ENCODE measurements at regions of chr13 and their contacts with region 1.

Region 1: DNA sequence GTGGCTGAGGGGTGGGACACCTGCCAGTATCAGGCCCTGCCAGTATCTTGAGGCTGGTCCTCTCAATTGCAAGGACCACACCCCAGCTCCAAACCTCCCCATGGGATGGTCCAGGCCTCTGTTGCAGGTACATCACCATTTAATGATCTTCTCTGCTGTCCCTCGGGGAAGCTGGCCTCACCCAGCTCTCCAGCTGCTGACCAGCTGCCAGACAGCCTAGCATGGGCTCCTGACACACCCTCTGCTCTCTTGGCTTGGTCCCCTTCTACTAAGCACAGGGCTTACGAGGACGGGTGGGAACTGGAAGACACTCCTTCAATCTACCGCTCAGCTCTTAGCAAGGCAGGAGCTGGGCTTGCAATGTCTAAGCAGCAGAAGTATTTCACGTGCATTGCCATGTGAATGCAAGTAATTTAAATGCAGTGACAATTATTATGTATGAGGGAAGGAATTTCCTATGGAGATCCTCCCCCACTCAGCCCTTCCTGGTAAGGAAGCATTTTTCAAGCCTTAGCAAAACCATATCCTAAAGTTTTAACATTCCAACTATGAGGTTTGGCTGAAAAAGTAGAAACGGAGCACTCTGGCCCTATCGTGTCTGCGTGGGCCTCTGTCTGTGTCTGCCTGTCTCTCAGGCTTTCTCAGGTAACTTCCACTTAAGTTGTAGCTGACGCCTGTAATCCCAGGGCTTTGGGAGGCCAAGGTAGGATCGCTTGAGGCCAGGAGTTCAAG is 63.8 kb downstream of the LATS2 start:
- DNase-seq: peak; percentile 65
- H3K4me3 ChIP-seq: no peak overlapping the region
- H3K27ac ChIP-seq: peak overlapping the region; percentile 46
- H3K4me1 ChIP-seq: peaks cover 16% of the 10 kb centered on the region
- H3K27me3 ChIP-seq: no peaks in the 10 kb centered on the region
- CTCF ChIP-seq: no peak
- POLR2A ChIP-seq: no peak

Region 2: GRCh38 chr13:20369886-20370361 is 627.7 kb before region 1 on chr13:
- CTCF ChIA-PET with region 1: no interaction called
- POLR2A ChIA-PET with region 1: no interaction called
- dilution Hi-C with region 1: no loop called
- intact Hi-C with region 1: no loop called
- DNase-seq: no peak
- H3K4me3 ChIP-seq: no peak overlapping the region
- H3K27ac ChIP-seq: no peak overlapping the region
- H3K4me1 ChIP-seq: no peaks in the 10 kb centered on the region
- H3K27me3 ChIP-seq: peaks cover 6 to 8% of the 10 kb centered on the region in 2 experiments
- CTCF ChIP-seq: no peak
- POLR2A ChIP-seq: no peak

Region 3: DNA sequence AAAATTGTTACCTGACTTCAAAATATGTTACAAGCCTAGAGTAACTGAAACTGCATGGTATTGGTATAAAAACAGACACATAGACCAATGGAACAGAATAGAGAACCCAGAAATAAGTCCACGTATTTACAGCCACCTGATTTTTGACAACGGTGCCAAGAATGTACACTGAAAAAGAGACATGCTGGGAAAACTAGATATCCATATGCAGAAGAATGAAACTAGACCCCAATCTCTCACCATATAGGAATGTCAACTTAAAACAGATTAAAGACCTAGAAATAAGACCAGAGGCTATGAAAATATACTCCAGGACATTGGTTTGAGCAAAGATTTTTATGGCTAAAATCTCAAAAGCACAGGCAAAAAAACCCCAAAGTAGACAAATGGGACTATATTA is 12.7 kb before region 1 on chr13:
- CTCF ChIA-PET with region 1: no interaction called
- POLR2A ChIA-PET with region 1: no interaction called
- dilution Hi-C with region 1: no loop called
- intact Hi-C with region 1: no loop called
- DNase-seq: no peak
- H3K4me3 ChIP-seq: no peak overlapping the region
- H3K27ac ChIP-seq: no peak overlapping the region
- H3K4me1 ChIP-seq: no peaks in the 10 kb centered on the region
- H3K27me3 ChIP-seq: no peaks in the 10 kb centered on the region
- CTCF ChIP-seq: no peak
- POLR2A ChIP-seq: no peak

Region 4: DNA sequence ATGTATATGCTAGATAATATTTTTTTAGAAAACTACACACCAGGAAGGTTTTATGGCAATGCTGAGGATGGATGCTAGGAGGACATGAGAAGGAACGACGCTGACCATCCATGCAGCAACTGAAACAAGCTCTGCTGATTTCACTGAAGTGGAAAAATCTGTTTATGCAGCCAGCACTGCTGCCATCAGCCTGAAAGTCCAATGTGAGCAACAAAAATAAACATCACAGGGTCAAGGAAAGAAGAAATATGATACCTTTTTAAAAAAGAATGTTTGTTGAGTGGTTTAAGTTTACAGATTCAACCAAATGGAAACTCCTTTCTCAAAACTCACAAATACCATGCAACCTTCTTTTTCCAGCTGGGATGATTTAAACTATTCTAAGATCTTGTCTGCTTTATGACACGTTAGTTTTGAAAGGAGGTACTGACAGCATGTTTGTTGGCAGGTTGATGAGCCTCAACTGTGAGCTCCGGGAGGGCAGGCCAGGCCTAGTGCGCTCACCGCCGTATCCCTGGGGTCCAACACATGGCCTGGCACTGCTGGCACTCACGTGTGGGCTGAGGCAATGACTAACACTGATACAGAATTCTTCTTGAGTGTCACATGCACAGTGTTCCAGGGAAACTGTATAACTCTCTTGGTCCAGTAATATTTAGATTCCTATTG is 17.0 kb after region 1 on chr13:
- CTCF ChIA-PET with region 1: interaction called, 3 read pairs
- POLR2A ChIA-PET with region 1: no interaction called
- dilution Hi-C with region 1: no loop called
- intact Hi-C with region 1: loop called (anchors 1 kb)
- DNase-seq: peak; percentile 58
- H3K4me3 ChIP-seq: no peak overlapping the region
- H3K27ac ChIP-seq: peak overlapping the region; percentile 32
- H3K4me1 ChIP-seq: peaks cover 51% of the 10 kb centered on the region
- H3K27me3 ChIP-seq: no peaks in the 10 kb centered on the region
- CTCF ChIP-seq: no peak
- POLR2A ChIP-seq: no peak

Measured in endothelial cell of umbilical vein (primary cell).